ENCODE measurements at regions of chr6 and their contacts with region 1.

Region 1: DNA sequence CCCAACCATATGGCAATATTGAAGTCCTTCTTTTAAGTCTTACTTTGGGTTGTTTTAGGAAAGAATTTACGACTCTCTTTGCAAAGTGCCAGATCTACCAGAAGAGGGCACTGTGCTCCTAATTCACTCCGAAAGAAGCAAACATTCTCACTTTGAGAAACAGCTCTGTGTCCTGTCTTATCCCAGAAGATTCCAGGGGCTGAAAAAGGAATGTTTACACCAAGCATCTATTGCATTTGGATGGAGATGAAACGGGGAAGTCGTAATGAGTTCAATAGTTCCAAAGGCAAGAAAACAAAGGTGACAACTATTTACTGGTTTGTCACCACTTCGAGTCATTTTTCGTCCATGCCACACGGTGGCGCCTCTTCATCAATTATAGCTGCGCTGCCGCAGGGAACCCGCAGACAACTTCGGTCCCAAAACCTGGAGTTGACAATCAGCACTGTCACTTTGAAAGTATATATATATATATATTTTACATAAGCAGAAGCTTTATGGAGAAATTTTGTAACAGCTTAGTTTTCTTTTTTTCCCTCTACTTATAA is 121.6 kb downstream of the MOXD1 start:
- DNase-seq: peak; percentile 65
- CTCF ChIP-seq: peak; percentile 77

Region 2: DNA sequence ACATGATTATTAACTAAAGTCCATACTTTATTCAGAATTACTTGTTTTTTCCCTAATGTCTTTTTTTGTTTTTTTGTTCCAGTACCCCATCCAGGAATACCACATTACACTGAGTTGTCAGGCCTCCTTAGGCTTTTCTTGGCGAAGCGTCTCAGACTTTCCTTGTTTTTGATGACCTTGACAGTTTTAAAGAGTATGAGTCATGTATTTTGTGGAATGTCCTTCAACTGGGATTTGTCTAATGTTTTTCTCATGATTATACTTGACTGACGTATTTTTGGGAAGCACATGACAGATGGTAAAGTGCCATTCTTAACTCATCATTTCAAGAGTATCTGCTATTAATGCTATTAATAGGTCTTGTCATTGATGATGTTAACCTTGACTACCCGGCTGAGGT is 448.3 kb before region 1 on chr6:
- CTCF ChIA-PET with region 1: no interaction called
- POLR2A ChIA-PET with region 1: no interaction called
- DNase-seq: no peak
- CTCF ChIP-seq: no peak

Region 3: GRCh38 chr6:132259070-132259469 is 20.6 kb before region 1 on chr6:
- CTCF ChIA-PET with region 1: interaction called, 23 read pairs
- POLR2A ChIA-PET with region 1: no interaction called
- DNase-seq: no peak
- CTCF ChIP-seq: no peak

Region 4: GRCh38 chr6:132320007-132320406 is 40.3 kb after region 1 on chr6:
- CTCF ChIA-PET with region 1: interaction called, 18 read pairs
- POLR2A ChIA-PET with region 1: no interaction called
- DNase-seq: no peak
- CTCF ChIP-seq: no peak

Region 5: DNA sequence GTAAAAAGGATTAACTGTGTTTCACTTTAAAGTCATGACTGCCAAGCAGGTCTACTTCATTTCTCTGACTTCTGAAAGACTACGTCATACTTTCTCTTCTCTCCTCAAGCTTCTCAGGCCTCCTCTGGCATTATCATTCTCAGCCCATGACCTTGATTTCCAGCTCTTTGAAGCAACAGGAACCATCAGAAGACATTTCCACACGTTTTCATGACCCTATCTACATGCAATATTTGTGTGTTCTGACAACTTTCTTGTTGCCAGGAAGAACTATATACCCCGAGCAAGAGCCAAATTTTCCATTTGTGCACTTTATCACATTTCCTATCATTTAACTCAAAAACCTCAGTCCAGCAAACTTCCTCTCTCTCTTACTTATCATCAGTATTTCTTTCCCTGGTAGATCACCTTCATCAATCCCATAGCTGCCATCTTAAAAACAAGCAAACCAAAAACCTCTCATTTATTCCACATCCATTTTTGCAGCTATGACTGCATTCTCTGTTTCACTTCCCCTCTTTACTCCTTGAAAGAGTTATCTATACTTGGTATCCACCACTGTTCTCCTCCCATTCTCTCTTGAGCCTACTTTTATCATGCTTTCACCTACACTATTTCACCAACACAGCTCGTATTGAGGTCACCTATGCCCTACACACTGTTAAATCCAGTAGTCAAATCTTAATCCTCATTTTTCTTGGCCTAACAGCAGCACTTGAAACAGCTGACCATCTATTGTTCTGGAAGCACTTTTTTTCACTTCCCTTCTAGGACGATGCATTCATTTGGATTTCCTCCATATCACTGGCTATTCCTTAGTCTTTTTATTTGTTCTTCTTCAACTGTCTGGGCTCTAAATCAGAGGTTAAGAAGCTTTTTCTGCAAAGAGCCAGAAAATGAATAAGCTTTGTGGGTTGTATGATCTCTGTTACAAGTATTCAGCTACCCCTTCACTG is 186.1 kb after region 1 on chr6:
- CTCF ChIA-PET with region 1: interaction called, 53 read pairs
- POLR2A ChIA-PET with region 1: interaction called, 4 read pairs
- DNase-seq: peak; percentile 28
- CTCF ChIP-seq: no peak

Region 6: DNA sequence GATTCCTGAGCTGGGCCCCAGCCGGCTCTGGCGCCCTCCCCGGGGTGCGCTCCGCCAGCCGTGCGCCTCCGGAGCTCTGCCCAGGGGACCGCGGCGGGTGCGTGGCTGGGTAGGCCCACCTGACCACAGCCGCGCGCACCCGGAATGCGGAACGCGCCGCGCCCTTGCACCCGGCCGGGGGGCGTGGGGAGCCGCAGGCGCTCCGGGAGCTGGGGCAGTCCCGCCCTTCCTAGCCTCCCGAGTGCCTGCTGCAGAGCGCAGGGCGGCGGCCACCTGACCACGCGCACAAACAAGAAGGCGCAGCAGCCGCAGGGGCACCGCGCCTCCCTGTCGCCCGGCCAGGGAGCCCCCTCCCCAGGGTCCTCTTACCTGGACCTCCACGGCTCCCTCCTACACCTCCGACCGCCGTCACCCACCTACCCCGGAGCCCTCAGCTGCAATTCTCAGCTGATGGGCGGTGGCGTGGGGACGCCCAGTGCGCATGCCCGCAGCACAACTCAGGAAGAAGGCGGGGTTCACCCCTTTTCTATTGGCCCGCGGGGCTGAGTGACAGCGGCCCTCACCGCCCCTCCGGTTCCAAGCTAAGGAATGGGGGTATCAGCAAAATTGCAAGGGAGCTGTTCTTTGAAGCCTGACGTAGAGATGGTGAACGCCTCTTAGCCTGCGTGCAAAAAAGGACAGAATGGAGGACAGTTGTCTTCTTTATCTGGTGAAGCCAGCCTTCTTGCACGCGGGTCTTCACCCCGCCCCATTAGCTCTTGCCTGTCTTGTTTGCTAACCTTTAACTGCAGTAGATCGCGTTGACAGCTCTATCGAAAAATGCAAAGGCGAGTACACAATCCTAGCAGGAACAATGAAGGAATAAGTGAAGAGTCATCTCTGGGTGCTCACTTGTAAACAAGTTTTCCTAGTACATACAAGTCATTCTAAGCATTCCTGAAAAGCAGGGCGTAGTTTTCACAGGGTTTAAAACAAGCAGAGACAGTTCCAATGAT is 233.3 kb after region 1 on chr6 and contains the start of gene STX7:
- CTCF ChIA-PET with region 1: interaction called, 11 read pairs
- POLR2A ChIA-PET with region 1: no interaction called
- DNase-seq: peak; percentile 90
- CTCF ChIP-seq: no peak

Region 7: DNA sequence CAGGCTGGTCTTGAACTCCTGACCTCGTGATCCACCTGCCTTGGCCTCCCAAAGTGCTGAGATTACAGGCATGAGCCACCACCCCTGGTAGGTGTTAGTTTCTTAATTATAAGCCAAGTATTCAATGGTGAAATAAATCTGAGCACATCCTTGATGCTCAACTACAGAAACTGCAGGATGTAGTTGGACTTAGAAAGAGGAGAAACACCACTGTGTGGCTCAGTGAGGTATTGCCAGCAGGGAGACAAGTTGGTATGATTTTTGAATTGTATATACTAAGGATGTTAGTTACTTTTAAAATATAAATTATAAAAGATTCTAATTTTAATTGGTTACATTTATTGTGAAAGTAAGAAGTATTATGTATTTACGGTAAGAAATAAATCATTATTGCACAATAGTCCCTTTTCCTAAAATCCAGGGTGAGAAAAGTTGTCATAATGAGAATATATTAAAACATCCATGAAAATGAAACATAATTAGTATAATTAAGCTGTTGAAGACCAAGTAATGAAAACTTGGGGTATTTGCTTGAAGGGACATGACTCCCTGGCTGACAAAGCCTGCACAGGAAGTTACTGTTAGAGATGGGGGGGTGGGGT is 501.2 kb after region 1 on chr6:
- CTCF ChIA-PET with region 1: interaction called, 11 read pairs
- POLR2A ChIA-PET with region 1: no interaction called
- DNase-seq: no peak
- CTCF ChIP-seq: no peak

Measured in GM10248 (cell line).